Pancreas (tissue), 10 donors: ENCODE measurements at regions of chr13 and their contacts with region 1.

Region 1: GRCh38 chr13:102580552-102581169 is 16.1 kb upstream of the TPP2 start:
- DNase-seq: no peak
- ATAC-seq: peak in 3 of 4 donors; percentile 78 to 86 (median 80)
- H3K4me3 ChIP-seq: no peak overlapping the region
- H3K27ac ChIP-seq: no peak overlapping the region
- H3K4me1 ChIP-seq: no peaks in the 10 kb centered on the region
- H3K27me3 ChIP-seq: no peaks in the 10 kb centered on the region
- CTCF ChIP-seq: peak; percentile 39 to 58 (median 44)

Region 2: DNA sequence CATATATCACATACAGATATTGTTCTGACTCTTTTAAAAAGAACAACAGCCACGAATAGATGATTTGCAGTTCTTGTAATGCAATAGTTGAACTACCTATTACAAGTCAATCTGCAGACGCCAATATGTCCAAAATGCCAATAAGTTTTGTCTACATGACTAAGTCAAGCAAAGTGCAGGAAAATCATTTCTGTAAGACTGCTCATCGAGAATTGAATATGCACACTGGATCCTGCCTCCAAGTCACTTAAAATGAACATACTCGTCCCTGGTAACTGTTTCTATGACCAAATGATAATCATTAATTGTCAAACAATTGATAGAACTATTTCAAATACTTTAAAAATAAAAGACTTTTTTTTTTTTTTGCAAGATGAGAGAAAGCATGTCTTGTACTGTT is 752.5 kb before region 1 on chr13:
- intact Hi-C with region 1: no loop called
- DNase-seq: no peak
- ATAC-seq: no peak
- H3K4me3 ChIP-seq: no peak overlapping the region
- H3K27ac ChIP-seq: no peak overlapping the region
- H3K4me1 ChIP-seq: no peaks in the 10 kb centered on the region
- H3K27me3 ChIP-seq: no peaks in the 10 kb centered on the region
- CTCF ChIP-seq: no peak

Region 3: DNA sequence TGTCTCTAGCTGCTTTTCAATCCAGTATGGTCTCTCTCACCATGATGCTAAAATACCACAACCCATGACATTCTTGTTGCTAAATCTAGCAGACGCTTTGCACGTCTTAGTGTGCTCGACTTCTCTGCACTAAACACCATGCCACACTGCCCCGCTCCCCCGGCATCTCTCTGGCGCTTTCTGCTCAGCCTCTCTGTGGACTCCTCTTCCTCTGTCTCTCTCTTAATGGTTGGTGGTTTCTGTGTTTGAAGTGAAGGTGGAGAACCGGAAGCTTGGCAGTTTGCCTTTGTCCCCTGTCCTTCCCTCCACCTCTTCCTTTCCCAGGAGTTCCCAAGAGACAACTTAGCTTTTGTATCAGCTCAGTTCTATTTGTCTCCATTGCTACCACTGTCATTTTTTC is 274.0 kb after region 1 on chr13:
- intact Hi-C with region 1: loop called in 1 of 3 experiments (anchors 10 kb)
- DNase-seq: no peak
- ATAC-seq: no peak
- H3K4me3 ChIP-seq: no peak overlapping the region
- H3K27ac ChIP-seq: no peak overlapping the region
- H3K4me1 ChIP-seq: no peaks in the 10 kb centered on the region
- H3K27me3 ChIP-seq: no peaks in the 10 kb centered on the region
- CTCF ChIP-seq: no peak